CD8-positive, alpha-beta T cell (primary cell): ENCODE measurements at regions of chr2 and their contacts with region 1.

Region 1: GRCh38 chr2:98444436-98445176 is at the start of gene INPP4A:
- DNase-seq: peak; percentile 61 to 91 (median 76)
- ATAC-seq: peak; percentile 67
- H3K4me3 ChIP-seq: peak within 1 kb of the TSS; percentile 77 to 89
- H3K4me3 Mint-ChIP-seq: peak within 1 kb of the TSS; percentile 98
- H3K27ac ChIP-seq: peak within 1 kb of the TSS; percentile 70 to 81
- H3K27ac Mint-ChIP-seq: peak within 1 kb of the TSS; percentile 98
- H3K4me1 ChIP-seq: peaks cover 33% of the 10 kb centered on the region
- H3K4me1 Mint-ChIP-seq: peaks cover 42% of the 10 kb centered on the region
- H3K27me3 ChIP-seq: no peaks in the 10 kb centered on the region
- H3K27me3 Mint-ChIP-seq: no peaks in the 10 kb centered on the region
- CTCF ChIP-seq: no peak
- total RNA-seq, gene INPP4A: 60.3 to 67.5 TPM

Region 2: DNA sequence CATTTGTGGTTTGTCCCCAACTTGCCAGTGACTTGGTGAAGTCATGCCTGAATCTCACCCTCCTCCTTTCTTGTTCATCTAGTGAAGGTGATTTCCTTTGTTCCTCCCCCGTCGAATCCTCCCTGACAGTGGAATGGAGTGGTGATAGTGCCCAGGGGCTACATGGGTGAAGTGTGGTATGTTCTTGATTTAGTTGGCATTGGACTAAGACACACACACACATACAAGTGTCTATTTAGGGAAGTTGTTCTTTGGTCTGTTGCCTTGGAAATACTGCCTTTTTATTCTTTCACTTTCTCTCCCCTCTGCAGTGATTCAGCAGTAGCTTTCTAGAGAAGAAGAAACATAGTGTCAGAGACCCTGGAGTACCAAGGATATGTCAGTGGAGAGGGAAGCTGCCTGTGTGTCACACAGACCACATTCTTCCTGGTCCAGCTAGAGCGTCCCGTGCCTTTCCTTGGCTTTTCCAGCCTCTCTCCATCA is 10.9 kb after region 1 on chr2:
- CTCF ChIA-PET with region 1: interaction called, 20 read pairs
- POLR2A ChIA-PET with region 1: interaction called, 38 read pairs
- intact Hi-C with region 1: loop called in 1 of 2 experiments (anchors 1 kb)
- DNase-seq: peak in 4 of 9 experiments; percentile 39 to 84 (median 60)
- ATAC-seq: peak; percentile 56
- H3K4me3 ChIP-seq: no peak overlapping the region
- H3K4me3 Mint-ChIP-seq: peak overlapping the region; percentile 56
- H3K27ac ChIP-seq: peak overlapping the region; percentile 63 to 76
- H3K27ac Mint-ChIP-seq: peak overlapping the region; percentile 92
- H3K4me1 ChIP-seq: peaks cover 98% of the 10 kb centered on the region
- H3K4me1 Mint-ChIP-seq: peaks cover 94% of the 10 kb centered on the region
- H3K27me3 ChIP-seq: no peaks in the 10 kb centered on the region
- H3K27me3 Mint-ChIP-seq: no peaks in the 10 kb centered on the region
- CTCF ChIP-seq: no peak

Region 3: DNA sequence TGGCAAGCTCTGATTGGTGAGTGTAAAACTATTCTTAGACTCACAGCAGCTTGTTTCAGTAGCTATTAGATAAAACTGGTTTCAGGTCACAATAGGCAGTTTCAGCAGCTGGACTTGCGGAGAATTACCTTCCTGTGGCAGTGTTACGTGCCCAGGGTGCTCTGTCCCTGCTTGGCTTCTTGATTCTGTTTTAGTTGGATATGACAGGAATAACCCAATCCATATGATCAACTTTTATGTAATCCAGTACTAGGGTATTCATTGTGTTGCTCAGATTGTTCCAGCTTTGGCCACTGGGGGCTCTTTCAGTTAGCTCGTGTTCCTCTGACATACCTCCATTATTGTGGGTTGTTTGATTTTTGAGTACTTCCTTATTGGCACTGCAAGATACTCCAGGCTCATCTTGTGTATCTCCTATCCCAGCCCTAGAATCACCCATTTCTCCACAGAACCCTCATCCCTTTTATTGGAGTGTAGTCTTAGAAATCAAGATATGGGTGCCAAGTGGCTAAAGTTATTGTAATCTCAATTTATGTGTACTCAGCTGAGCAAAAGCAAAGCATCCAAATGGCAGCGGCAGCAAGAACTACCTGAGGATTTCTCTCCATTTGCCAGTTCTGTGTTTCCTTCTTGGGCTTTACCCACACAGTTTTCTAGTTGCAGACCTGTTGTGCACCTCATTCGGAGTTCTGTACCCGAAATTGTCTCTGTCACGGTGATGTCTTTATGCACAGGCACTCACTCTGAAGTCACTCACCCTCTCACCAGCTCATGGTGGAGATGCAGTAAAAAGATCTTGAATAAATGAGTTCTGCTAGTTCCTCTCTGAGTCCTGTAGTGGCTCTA is 43.4 kb after region 1 on chr2:
- CTCF ChIA-PET with region 1: interaction called, 12 read pairs
- POLR2A ChIA-PET with region 1: interaction called, 4 read pairs
- intact Hi-C with region 1: loop called (anchors 1 to 2 kb)
- DNase-seq: peak in 7 of 9 experiments; percentile 31 to 78 (median 64)
- ATAC-seq: peak; percentile 86
- H3K4me3 ChIP-seq: no peak overlapping the region
- H3K4me3 Mint-ChIP-seq: peak overlapping the region; percentile 47
- H3K27ac ChIP-seq: no peak overlapping the region
- H3K27ac Mint-ChIP-seq: peak overlapping the region; percentile 84
- H3K4me1 ChIP-seq: peaks cover 95% of the 10 kb centered on the region
- H3K4me1 Mint-ChIP-seq: peaks cover 97% of the 10 kb centered on the region
- H3K27me3 ChIP-seq: no peaks in the 10 kb centered on the region
- H3K27me3 Mint-ChIP-seq: no peaks in the 10 kb centered on the region
- CTCF ChIP-seq: peak; percentile 71

Region 4: GRCh38 chr2:98508709-98509066 is 64.1 kb after region 1 on chr2:
- CTCF ChIA-PET with region 1: interaction called, 5 read pairs
- POLR2A ChIA-PET with region 1: no interaction called
- intact Hi-C with region 1: loop called in 1 of 2 experiments (anchors 2 kb)
- DNase-seq: peak in 8 of 9 experiments; percentile 21 to 83 (median 56)
- ATAC-seq: peak; percentile 88
- H3K4me3 ChIP-seq: no peak overlapping the region
- H3K4me3 Mint-ChIP-seq: peak overlapping the region; percentile 35
- H3K27ac ChIP-seq: no peak overlapping the region
- H3K27ac Mint-ChIP-seq: peak overlapping the region; percentile 85
- H3K4me1 ChIP-seq: peaks cover 83% of the 10 kb centered on the region
- H3K4me1 Mint-ChIP-seq: peaks cover 97% of the 10 kb centered on the region
- H3K27me3 ChIP-seq: no peaks in the 10 kb centered on the region
- H3K27me3 Mint-ChIP-seq: no peaks in the 10 kb centered on the region
- CTCF ChIP-seq: no peak

Region 5: DNA sequence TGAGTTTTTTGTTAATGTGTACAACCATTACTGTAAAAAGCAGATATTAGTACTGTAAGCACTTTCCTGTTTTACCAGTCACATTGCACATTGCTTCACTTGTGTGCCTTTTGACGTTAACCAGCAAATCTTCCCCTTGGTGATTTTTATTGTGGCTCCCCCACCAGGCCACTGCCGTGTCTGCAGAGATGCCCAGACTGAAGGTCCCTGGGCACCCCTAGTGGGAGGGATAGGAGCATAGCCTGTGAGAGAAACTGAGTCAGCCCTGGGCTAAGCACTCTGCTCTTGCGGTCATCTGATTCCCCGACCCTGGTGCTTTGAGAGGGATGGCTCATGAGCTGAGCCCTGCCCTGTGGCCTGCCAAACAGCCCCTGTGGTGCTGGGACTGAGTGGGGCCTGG is 73.5 kb after region 1 on chr2:
- CTCF ChIA-PET with region 1: interaction called, 16 read pairs
- POLR2A ChIA-PET with region 1: interaction called, 3 read pairs
- intact Hi-C with region 1: loop called in 1 of 2 experiments (anchors 2 kb)
- DNase-seq: peak; percentile 20 to 80 (median 64)
- ATAC-seq: peak; percentile 76
- H3K4me3 ChIP-seq: no peak overlapping the region
- H3K4me3 Mint-ChIP-seq: no peak overlapping the region
- H3K27ac ChIP-seq: no peak overlapping the region
- H3K27ac Mint-ChIP-seq: peak overlapping the region; percentile 65
- H3K4me1 ChIP-seq: peaks cover 40% of the 10 kb centered on the region
- H3K4me1 Mint-ChIP-seq: peaks cover 55% of the 10 kb centered on the region
- H3K27me3 ChIP-seq: no peaks in the 10 kb centered on the region
- H3K27me3 Mint-ChIP-seq: no peaks in the 10 kb centered on the region
- CTCF ChIP-seq: peak; percentile 81

Region 6: DNA sequence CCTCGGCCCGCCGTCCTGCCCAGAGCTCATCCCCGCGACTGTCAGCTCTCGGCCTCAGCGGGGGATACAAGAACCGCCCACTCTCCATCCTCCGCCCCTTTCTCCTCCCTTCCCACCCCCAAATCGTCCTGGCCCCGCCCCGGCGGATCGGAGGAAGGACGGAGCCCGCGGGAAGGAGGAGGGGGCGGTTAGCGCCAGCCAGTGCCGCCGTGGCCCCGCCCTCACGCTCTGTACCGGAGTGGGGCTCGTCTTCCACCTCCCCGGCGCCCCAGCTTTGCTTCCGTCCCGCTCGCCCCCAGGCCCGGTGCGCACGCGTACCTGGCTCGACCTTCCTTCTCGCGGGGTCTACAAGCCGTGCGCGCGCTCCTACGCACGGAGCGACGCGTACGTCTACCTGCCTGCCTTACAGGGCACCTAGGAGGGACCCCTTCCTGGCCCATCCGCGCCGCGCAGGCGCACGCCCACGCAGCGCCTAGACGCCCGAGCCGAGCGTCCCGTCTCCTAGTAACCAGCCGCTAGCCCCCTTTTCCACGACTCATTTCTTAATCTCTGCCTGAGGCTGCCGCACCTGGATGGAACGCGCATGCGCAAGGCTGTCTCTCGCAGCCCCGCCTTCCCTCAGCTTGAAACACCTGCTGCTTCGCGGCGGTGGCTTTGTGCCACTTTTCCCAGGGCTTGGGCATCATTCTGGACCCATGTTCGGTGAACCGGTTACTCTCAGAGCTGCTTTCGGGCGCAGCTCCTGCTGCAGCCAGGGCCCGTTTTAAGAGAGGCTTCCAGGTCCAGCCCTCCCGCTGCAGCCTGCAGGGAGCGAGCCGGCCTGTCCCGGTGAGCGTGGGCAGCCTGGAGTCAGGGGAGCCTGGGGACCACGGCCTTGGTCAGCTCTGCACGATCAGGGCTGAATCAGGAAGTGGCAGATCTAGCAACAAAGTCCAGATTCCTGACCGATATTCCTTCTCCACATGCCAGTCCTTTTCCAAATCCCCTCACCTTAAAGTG is 696.8 kb after region 1 on chr2 and contains the start of gene C2orf15:
- CTCF ChIA-PET with region 1: no interaction called
- POLR2A ChIA-PET with region 1: no interaction called
- intact Hi-C with region 1: loop called in 1 of 2 experiments (anchors 10 kb)
- DNase-seq: peak; percentile 91 to 98 (median 97)
- ATAC-seq: peak; percentile 88
- H3K4me3 ChIP-seq: peak within 1 kb of the TSS; percentile 86 to 97
- H3K4me3 Mint-ChIP-seq: peak within 1 kb of the TSS; percentile 88
- H3K27ac ChIP-seq: peak within 1 kb of the TSS; percentile 90 to 91
- H3K27ac Mint-ChIP-seq: peak within 1 kb of the TSS; percentile 96
- H3K4me1 ChIP-seq: peaks cover 14% of the 10 kb centered on the region
- H3K4me1 Mint-ChIP-seq: peaks cover 25% of the 10 kb centered on the region
- H3K27me3 ChIP-seq: no peaks in the 10 kb centered on the region
- H3K27me3 Mint-ChIP-seq: no peaks in the 10 kb centered on the region
- CTCF ChIP-seq: no peak
- total RNA-seq, gene C2orf15: 1.3 to 1.8 TPM